Heart right ventricle (tissue), 16 donors: ENCODE measurements at regions of chr6 and their contacts with region 1.

Region 1: DNA sequence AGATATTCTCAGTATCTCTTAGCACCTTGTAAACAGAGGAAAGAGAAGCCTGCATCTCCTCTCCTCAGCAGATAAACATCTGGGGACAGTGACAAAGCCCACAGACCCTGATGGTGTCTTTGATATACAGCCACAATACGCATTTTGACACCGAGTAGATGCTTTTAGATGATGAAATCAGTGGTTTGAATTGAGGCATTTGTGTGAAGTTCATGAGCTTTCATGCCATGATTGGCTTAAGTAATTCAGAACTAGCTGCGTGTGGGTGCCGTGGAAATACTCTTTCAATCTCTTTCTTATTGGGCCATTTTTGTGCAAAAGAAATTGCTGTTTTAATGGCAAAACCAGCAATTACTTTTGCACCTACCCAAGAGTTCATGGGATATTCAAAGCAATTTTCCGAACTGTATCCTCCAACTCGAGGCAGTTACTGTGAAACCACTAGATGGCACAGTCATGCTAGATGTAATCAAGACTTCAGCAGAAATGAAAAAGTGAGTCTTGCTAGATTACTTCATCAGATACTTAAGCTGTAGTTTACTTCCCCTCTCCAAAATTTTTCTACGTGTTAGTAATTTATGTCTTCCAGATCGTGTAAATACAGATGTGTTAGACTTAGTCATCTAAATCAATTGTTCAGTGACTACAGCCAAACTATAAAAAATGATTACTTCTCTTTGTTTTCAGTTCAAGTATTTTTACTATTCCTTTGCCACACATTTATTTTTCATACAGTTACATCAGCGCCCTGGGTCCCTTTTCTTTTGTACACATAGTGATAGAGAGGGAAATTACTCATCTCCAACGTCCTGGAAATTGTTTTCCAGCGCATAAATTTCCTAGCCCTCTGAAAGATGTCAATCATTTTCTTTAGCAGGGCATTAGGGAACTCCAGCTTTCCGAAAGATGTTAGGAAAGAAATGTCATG is 49.4 kb downstream of the IYD start:
- DNase-seq: peak in 1 of 2 donors; percentile 63
- ATAC-seq: peak in 7 of 8 donors; percentile 71 to 92 (median 88)
- H3K4me3 ChIP-seq: peak overlapping the region in 9 of 10 donors; percentile 11 to 52 (median 41)
- H3K27ac ChIP-seq: peak overlapping the region; percentile 24 to 90 (median 76)
- H3K4me1 ChIP-seq: peaks cover 0 to 30% (median 12%) of the 10 kb centered on the region in 9 donors
- H3K27me3 ChIP-seq: peaks cover 0 to 7% (median 0%) of the 10 kb centered on the region in 7 donors
- CTCF ChIP-seq: peak; percentile 59 to 91 (median 81)

Region 2: GRCh38 chr6:150537893-150538292 is 119.7 kb after region 1 on chr6:
- intact Hi-C with region 1: loop called in 2 of 10 experiments (anchors 5 kb)
- DNase-seq: peak in 1 of 2 donors; percentile 59
- ATAC-seq: peak; percentile 55 to 86 (median 76)
- H3K4me3 ChIP-seq: no peak overlapping the region
- H3K27ac ChIP-seq: peak overlapping the region in 9 of 10 donors; percentile 28 to 80 (median 59)
- H3K4me1 ChIP-seq: peaks cover 0 to 40% (median 7%) of the 10 kb centered on the region in 9 donors
- H3K27me3 ChIP-seq: no peaks in the 10 kb centered on the region
- CTCF ChIP-seq: no peak

Region 3: GRCh38 chr6:150573041-150573681 is 155.0 kb after region 1 on chr6:
- intact Hi-C with region 1: loop called in 1 of 10 experiments (anchors 10 kb)
- DNase-seq: peak in 1 of 2 donors; percentile 22
- ATAC-seq: peak; percentile 27 to 50 (median 36)
- H3K4me3 ChIP-seq: no peak overlapping the region
- H3K27ac ChIP-seq: no peak overlapping the region
- H3K4me1 ChIP-seq: peaks cover 0 to 22% (median 0%) of the 10 kb centered on the region in 9 donors
- H3K27me3 ChIP-seq: peaks cover 0 to 32% (median 3%) of the 10 kb centered on the region in 7 donors
- CTCF ChIP-seq: no peak

Region 4: DNA sequence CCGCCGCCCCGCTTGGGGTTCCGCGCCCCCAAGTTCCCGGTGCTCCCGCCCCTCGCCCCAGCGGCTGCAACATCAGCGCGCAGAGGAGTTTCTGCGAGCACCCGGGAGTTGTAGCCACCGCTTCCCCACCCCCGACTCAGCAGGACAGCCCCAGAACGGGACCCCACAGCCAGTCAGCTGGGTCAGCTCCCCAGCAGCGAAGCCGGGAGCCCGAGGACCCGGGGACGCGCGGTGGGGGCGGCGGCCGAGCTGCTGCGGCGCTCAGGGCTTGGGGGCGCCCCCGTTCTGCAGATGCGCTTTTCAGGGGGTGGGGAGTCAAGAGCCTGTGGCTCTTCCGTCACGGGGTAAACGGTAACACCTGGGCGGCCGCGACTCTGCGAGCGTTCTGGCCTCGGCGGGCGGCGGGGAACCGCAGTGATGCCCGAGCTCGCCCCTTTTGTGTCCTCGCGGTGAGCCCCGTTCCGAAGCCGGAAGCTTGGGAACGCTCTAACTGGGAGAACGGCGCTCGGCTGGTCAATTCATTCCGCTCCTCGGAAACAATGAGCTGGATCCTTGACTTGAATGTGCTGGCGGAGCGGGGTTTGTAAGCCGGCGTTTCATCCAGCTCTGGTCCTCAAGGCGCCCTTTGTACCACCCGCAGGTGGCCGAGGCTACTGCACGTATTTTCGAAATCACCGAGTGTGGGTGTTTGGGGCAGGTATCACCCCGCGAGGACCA is 182.3 kb after region 1 on chr6:
- intact Hi-C with region 1: loop called in 7 of 10 experiments (anchors 1 to 10 kb)
- DNase-seq: peak; percentile 55 to 73
- ATAC-seq: peak; percentile 65 to 83 (median 78)
- H3K4me3 ChIP-seq: peak overlapping the region; percentile 56 to 94 (median 80)
- H3K27ac ChIP-seq: peak overlapping the region; percentile 84 to 96 (median 90)
- H3K4me1 ChIP-seq: peaks cover 0 to 25% (median 12%) of the 10 kb centered on the region in 9 donors
- H3K27me3 ChIP-seq: peaks cover 0 to 63% (median 6%) of the 10 kb centered on the region in 7 donors
- CTCF ChIP-seq: peak; percentile 19 to 64 (median 51)

Region 5: GRCh38 chr6:150741633-150742504 is 323.7 kb after region 1 on chr6:
- intact Hi-C with region 1: loop called in 3 of 10 experiments (anchors 2 to 10 kb)
- DNase-seq: no peak
- ATAC-seq: peak in 1 of 8 donors; percentile 8
- H3K4me3 ChIP-seq: no peak overlapping the region
- H3K27ac ChIP-seq: no peak overlapping the region
- H3K4me1 ChIP-seq: peaks cover 0 to 60% (median 23%) of the 10 kb centered on the region in 9 donors
- H3K27me3 ChIP-seq: no peaks in the 10 kb centered on the region
- CTCF ChIP-seq: peak in 8 of 9 donors; percentile 16 to 58 (median 45)

Region 6: DNA sequence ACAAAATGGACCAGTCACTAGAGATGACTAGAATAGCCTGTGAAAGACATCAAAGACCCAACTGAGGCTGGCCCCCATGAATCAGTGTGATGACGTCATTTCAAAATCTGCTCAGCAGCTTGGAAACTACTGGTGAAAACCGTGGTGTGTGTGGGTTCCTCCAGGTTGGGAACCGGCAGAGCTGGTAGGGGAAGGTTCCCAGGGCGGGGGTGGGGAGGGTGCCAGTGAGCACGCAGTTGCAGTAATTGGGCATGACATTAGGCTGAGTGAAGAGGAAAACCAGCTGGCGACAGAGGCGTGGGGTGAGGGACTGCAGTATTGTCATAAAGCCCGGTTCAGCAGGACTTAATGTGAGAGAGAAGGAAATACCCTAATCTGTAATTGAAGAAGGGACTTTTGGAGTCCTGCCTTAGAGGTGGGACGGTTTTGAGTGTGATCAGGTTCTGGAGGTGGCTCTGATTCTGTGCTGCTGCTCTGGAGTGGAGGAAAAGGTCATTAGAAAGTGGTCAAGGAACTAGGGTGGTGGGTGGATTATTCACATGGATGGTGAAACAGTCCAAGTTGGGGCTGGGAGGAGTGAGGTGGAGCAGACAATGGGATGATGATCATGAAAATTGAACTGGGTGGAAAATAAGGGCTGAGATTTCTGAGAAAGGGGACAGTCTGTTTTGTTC is 395.3 kb after region 1 on chr6:
- intact Hi-C with region 1: loop called (anchors 1 to 5 kb)
- DNase-seq: no peak
- ATAC-seq: peak; percentile 12 to 62 (median 36)
- H3K4me3 ChIP-seq: no peak overlapping the region
- H3K27ac ChIP-seq: peak overlapping the region in 9 of 10 donors; percentile 34 to 77 (median 59)
- H3K4me1 ChIP-seq: peaks cover 0 to 35% (median 12%) of the 10 kb centered on the region in 9 donors
- H3K27me3 ChIP-seq: peaks cover 0 to 5% (median 0%) of the 10 kb centered on the region in 7 donors
- CTCF ChIP-seq: no peak